ENCODE measurements at regions of chr7 and their contacts with region 1.

Region 1: GRCh38 chr7:26365077-26365900 is 73.6 kb downstream of the SNX10 start:
- DNase-seq: no peak
- ATAC-seq: peak; percentile 89
- H3K4me3 Mint-ChIP-seq: no peak overlapping the region
- H3K27ac Mint-ChIP-seq: peak overlapping the region; percentile 85
- H3K4me1 Mint-ChIP-seq: peaks cover 46% of the 10 kb centered on the region
- H3K27me3 Mint-ChIP-seq: no peaks in the 10 kb centered on the region
- CTCF ChIP-seq: peak; percentile 52

Region 2: DNA sequence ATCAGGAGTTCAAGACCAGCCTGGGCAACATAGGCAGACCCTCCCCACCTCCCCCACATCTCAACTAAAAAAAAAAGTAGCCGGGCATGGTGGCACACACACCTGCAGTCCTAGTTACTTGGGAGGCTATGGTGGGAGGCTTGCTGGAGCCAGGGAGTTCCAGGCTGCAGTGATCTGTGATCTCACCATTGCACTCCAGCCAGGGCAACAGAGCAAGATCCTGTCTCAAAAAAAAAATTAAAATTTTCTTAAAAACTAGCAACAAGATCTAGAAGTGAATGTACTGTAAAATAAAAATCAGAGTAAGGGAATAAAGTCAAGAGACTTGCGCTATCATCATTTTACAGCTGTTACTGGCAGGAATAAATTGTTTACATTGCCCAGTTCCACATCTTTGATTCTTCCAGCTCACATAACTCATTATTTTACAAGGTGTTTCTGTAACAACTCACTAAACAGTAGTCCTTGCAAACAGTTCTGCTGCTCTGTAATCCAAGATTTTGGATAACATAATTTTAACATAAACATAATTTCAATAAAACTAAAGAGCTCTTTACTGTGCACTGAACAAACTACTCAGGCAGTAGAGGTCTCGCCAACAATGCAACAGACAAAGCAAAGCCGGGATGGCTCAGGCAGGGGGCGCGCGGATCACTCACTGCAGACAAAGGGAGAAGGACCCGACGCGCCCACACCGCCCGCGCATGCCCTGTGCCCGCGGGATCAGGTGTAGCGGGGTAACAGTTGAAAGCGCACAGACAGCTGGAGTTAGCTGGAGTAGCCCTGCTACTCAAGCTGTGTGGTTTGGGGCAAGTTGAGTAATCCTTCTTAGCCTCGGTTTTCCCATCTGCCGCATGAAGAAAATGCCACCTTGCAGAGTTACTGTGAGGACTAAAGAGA is 286.6 kb before region 1 on chr7:
- CTCF ChIA-PET with region 1: interaction called, 60 read pairs
- POLR2A ChIA-PET with region 1: interaction called, 5 read pairs
- intact Hi-C with region 1: loop called (anchors 1 kb)
- DNase-seq: peak; percentile 73
- ATAC-seq: peak; percentile 100
- H3K4me3 Mint-ChIP-seq: no peak overlapping the region
- H3K27ac Mint-ChIP-seq: no peak overlapping the region
- H3K4me1 Mint-ChIP-seq: peaks cover 7% of the 10 kb centered on the region
- H3K27me3 Mint-ChIP-seq: peaks cover 33% of the 10 kb centered on the region
- CTCF ChIP-seq: no peak

Region 3: GRCh38 chr7:26278770-26279169 is 86.5 kb before region 1 on chr7:
- CTCF ChIA-PET with region 1: interaction called, 77 read pairs
- POLR2A ChIA-PET with region 1: interaction called, 4 read pairs
- intact Hi-C with region 1: loop called (anchors 1 kb)
- DNase-seq: no peak
- ATAC-seq: peak; percentile 82
- H3K4me3 Mint-ChIP-seq: no peak overlapping the region
- H3K27ac Mint-ChIP-seq: no peak overlapping the region
- H3K4me1 Mint-ChIP-seq: peaks cover 11% of the 10 kb centered on the region
- H3K27me3 Mint-ChIP-seq: peaks cover 3% of the 10 kb centered on the region
- CTCF ChIP-seq: no peak

Region 4: DNA sequence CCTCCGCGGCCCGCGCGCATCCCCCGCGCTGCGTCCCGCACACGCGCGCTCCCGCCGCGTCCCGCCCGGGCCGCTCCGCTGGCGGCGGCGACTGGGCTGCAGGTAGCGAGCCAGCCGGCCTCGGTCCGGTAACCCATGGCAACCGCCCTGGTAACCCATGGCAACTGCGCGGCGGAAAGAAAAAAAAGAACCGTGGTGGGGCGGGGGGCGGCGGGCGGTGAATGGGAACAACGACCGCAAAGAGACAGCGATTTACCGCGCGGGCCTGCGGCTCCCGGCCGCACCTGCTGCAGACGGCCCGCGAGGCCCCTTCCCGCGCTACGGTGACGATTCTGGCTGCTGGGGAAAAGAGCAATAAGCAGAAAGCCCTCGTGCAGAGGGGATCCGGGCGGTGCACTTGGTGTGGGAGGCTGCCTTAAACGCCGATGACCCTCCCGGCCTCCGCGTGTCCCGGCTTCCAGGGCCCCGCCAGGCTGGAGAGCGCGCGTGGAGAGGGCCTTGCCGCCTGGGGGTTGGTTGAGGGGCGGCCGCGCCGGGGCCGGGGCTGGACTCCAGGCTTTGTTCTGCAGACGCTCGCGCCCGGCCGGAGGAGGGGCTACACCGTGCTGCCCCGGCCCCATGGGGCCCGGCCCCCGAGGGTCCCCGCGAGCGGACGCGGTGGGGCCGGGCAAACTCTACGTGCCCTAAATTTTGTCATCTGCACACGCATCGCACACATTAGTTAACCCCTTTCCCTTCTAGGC is 11.1 kb after region 1 on chr7:
- CTCF ChIA-PET with region 1: interaction called, 18 read pairs
- POLR2A ChIA-PET with region 1: interaction called, 4 read pairs
- intact Hi-C with region 1: no loop called
- DNase-seq: peak; percentile 47
- ATAC-seq: peak; percentile 46
- H3K4me3 Mint-ChIP-seq: peak overlapping the region; percentile 83
- H3K27ac Mint-ChIP-seq: no peak overlapping the region
- H3K4me1 Mint-ChIP-seq: peaks cover 4% of the 10 kb centered on the region
- H3K27me3 Mint-ChIP-seq: peaks cover 2% of the 10 kb centered on the region
- CTCF ChIP-seq: no peak

Region 5: DNA sequence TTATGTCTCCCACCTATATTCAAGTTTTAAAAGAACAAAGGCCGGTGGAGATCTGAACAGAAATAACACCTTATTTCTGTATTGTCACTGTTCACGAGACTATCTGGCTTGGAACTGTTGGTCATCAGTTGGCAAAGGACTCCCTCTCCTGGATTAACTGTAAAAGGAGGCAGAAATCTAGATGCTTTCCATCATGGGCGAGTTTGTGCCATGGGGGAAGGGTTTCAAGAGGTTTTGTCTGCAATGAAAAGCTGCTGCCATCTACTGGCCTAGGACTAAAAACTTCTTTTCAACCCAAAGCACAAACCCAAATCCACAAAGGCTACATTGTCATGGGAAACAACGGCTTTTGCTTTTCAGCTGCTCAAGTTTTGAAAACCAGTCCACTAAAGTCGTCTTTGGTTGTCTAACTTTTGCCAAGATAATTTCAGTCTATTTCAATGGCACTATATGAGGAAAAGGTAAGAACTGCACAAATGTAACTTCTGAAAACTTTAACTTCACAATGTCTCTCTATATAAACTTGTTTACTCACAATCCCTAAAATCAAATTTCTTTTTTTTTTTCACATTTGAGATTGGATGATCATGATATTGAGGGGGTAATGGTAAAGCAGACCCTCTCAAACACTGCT is 302.3 kb after region 1 on chr7:
- CTCF ChIA-PET with region 1: interaction called, 72 read pairs
- POLR2A ChIA-PET with region 1: no interaction called
- intact Hi-C with region 1: loop called (anchors 1 kb)
- DNase-seq: no peak
- ATAC-seq: peak; percentile 60
- H3K4me3 Mint-ChIP-seq: no peak overlapping the region
- H3K27ac Mint-ChIP-seq: no peak overlapping the region
- H3K4me1 Mint-ChIP-seq: peaks cover 18% of the 10 kb centered on the region
- H3K27me3 Mint-ChIP-seq: no peaks in the 10 kb centered on the region
- CTCF ChIP-seq: no peak

Measured in activated B cell treated with CpG ODN at 0.5 μM for 24 hours (primary cell).